B cell (primary cell): ENCODE measurements at regions of chr19 and their contacts with region 1.

Region 1: DNA sequence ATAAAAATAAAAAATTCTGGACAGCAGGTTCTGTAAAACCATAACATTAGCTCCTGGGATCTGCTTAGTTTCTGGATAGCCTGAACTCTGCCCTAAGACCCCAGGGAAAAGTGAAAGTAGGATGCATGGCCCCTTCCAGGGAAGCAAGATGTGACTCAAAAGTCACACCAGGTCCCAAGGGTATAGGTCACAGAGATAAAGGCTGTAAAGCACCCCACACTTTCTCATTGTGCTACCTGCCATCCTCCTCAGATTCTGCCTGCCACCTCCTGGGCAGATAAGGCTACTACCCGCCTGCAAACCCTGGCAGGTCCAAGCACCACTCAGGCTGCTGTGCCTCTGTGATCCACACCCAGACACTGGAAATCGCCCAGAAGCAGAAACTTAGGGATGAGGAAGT is 20.6 kb downstream of the FFAR2 start:
- DNase-seq: peak; percentile 84
- ATAC-seq: peak; percentile 100
- H3K4me3 ChIP-seq: no peak overlapping the region
- H3K4me3 Mint-ChIP-seq: no peak overlapping the region
- H3K27ac ChIP-seq: no peak overlapping the region
- H3K27ac Mint-ChIP-seq: peak overlapping the region; percentile 23
- H3K4me1 ChIP-seq: peaks cover 2 to 12% of the 10 kb centered on the region in 2 donors
- H3K4me1 Mint-ChIP-seq: peaks cover 10% of the 10 kb centered on the region
- H3K27me3 ChIP-seq: no peaks in the 10 kb centered on the region
- H3K27me3 Mint-ChIP-seq: no peaks in the 10 kb centered on the region
- CTCF ChIP-seq: peak; percentile 84

Region 2: GRCh38 chr19:35269421-35270117 is 199.1 kb before region 1 on chr19:
- CTCF ChIA-PET with region 1: interaction called, 9 read pairs
- POLR2A ChIA-PET with region 1: interaction called, 4 read pairs
- intact Hi-C with region 1: loop called (anchors 1 kb)
- DNase-seq: peak; percentile 92
- ATAC-seq: peak; percentile 71
- H3K4me3 ChIP-seq: peak overlapping the region in 4 of 5 experiments; percentile 24 to 62 (median 54)
- H3K4me3 Mint-ChIP-seq: peak overlapping the region; percentile 84
- H3K27ac ChIP-seq: no peak overlapping the region
- H3K27ac Mint-ChIP-seq: peak overlapping the region; percentile 87
- H3K4me1 ChIP-seq: peaks cover 39 to 57% of the 10 kb centered on the region in 2 donors
- H3K4me1 Mint-ChIP-seq: peaks cover 62% of the 10 kb centered on the region
- H3K27me3 ChIP-seq: no peaks in the 10 kb centered on the region
- H3K27me3 Mint-ChIP-seq: no peaks in the 10 kb centered on the region
- CTCF ChIP-seq: peak; percentile 77

Region 3: DNA sequence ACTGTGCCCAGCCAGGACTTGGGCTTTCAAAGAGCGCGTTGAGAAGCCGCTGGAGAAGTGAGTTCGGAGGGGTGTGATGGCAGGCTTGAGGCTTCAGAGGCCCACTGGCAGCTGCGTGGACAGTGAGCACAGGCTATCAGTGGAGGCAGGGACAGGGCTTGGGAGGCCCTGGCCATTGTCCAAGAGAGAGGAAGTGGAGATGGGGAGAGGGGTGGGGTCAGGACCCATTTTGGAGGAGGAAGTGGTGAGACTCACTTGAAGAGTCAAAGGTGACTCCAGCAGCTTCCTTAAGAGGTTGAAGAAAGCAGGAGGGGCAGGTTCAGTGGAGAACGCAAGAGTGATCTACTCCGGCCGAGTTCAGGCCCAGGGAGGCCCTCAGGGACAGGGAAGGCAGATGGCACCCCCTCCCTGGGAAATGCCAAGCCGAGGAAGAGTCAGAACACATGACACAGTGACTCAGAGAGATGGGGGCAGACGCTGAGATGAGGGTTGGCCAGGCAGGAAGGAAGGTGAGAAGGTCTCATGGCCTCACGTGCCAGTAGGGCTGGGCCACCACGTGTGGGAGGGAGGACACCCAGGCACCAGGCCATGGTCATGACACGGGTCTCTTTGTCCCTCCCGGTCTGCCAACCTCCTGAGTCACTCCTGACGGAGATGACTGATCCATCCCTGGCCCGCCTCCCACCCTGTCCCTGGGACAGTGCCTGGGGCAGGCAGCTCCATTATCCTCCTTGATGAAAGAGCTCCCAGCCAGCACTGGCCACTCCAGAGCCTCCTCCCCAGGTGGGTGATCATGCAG is 149.8 kb before region 1 on chr19:
- CTCF ChIA-PET with region 1: interaction called, 13 read pairs
- POLR2A ChIA-PET with region 1: interaction called, 3 read pairs
- intact Hi-C with region 1: no loop called
- DNase-seq: peak; percentile 65
- ATAC-seq: peak; percentile 25
- H3K4me3 ChIP-seq: peak overlapping the region in 1 of 5 experiments; percentile 53
- H3K4me3 Mint-ChIP-seq: peak overlapping the region; percentile 75
- H3K27ac ChIP-seq: peak overlapping the region; percentile 94 to 97
- H3K27ac Mint-ChIP-seq: peak overlapping the region; percentile 91
- H3K4me1 ChIP-seq: peaks cover 81 to 97% of the 10 kb centered on the region in 2 donors
- H3K4me1 Mint-ChIP-seq: peaks cover 85% of the 10 kb centered on the region
- H3K27me3 ChIP-seq: no peaks in the 10 kb centered on the region
- H3K27me3 Mint-ChIP-seq: no peaks in the 10 kb centered on the region
- CTCF ChIP-seq: no peak

Region 4: DNA sequence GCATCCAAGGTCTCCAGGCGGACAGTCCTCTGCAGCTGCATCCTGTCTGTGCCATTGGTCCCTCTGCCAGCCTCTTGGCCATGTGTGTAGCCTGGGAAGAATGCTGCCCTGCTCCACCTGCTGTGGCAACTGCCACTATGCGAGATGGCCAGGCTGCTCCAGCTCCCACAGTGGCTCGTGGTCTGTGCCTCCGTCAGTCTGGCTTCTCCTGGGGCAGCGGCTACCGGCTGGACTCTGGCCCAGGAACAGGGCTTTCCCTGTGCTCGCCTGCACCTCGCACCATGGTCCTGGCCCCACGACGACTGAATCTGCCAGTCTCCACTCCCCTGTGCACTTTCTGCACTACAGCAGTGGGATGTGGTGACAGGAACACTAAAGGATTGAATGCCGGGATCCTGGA is 47.3 kb before region 1 on chr19:
- CTCF ChIA-PET with region 1: interaction called, 20 read pairs
- POLR2A ChIA-PET with region 1: interaction called, 5 read pairs
- intact Hi-C with region 1: loop called (anchors 1 kb)
- DNase-seq: no peak
- ATAC-seq: no peak
- H3K4me3 ChIP-seq: no peak overlapping the region
- H3K4me3 Mint-ChIP-seq: no peak overlapping the region
- H3K27ac ChIP-seq: no peak overlapping the region
- H3K27ac Mint-ChIP-seq: no peak overlapping the region
- H3K4me1 ChIP-seq: peaks cover 3 to 4% of the 10 kb centered on the region in 2 donors
- H3K4me1 Mint-ChIP-seq: peaks cover 10% of the 10 kb centered on the region
- H3K27me3 ChIP-seq: peaks cover 0 to 6% (median 2%) of the 10 kb centered on the region in 4 experiments
- H3K27me3 Mint-ChIP-seq: peaks cover 30% of the 10 kb centered on the region
- CTCF ChIP-seq: no peak

Region 5: DNA sequence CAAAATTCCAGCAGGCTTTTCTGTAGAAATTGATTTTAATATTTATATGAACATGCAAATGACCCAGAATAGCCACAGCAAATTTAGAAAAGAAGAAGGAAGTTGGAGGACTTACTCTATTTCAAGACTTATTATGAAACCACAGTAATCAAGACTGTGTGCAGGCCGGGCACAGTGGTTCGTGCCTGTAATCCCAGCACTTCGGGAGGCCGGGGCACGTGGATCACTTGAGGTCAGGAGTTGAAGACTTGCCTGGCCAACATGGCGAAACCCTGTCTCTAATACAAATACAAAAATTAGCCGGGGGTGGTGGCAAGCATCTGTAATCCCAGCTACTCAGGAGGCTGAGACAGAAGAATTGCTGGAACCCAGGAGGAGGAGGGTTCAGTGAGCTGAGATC is 26.5 kb before region 1 on chr19:
- CTCF ChIA-PET with region 1: no interaction called
- POLR2A ChIA-PET with region 1: no interaction called
- intact Hi-C with region 1: no loop called
- DNase-seq: peak; percentile 34
- ATAC-seq: no peak
- H3K4me3 ChIP-seq: peak overlapping the region in 2 of 5 experiments; percentile 6 to 29
- H3K4me3 Mint-ChIP-seq: peak overlapping the region; percentile 57
- H3K27ac ChIP-seq: no peak overlapping the region
- H3K27ac Mint-ChIP-seq: no peak overlapping the region
- H3K4me1 ChIP-seq: peaks cover 19 to 25% of the 10 kb centered on the region in 2 donors
- H3K4me1 Mint-ChIP-seq: peaks cover 50% of the 10 kb centered on the region
- H3K27me3 ChIP-seq: peaks cover 0 to 2% (median 0%) of the 10 kb centered on the region in 4 experiments
- H3K27me3 Mint-ChIP-seq: peaks cover 6% of the 10 kb centered on the region
- CTCF ChIP-seq: no peak

Region 6: DNA sequence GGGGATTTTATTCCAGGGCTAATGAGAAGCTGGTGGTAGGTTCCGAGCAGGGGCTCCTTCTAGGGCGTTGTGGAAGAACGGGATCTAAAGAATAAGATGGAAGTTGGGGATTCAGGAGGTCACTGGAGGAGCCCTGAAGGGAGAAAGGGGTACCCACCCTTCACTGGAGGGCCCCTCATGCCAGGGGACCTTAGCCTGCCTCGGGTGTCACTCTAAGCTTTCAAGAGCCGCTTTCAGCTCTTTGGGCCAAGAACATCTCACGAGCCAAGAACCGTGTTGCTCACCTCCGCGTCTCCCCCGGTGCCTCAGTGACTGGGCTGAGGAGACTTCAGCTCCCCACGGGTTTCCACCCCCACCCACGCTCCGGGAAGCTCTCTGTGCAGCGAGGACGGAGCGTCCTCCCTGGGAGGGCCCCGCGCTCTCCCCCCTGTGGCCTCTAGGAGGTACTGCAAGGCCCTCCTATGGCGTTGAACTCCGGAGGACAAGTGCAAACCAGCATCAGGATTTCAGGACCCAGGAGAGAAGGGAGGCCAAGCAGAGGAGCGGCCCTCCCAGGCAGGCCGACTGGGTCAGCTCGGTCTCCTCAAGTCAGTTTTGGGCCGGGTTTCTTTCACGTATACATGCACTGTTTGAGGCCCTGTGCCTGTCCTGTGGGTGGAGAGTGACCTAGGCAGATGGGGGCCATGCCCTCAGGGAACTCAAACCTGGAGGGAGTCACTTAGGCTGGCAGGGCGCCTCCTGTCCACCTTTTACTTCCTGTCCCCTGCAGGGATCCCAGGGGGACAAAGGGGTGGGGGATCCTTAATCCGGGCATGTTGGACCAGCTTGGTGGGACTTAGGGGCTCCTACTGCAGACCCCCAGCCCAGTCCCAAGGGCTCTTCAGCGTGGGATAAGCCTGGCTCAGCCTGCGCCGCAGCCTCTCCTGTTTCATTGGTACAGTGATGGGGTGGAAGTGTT is 26.7 kb after region 1 on chr19:
- CTCF ChIA-PET with region 1: interaction called, 21 read pairs
- POLR2A ChIA-PET with region 1: no interaction called
- intact Hi-C with region 1: loop called (anchors 1 kb)
- DNase-seq: peak; percentile 82
- ATAC-seq: peak; percentile 99
- H3K4me3 ChIP-seq: peak overlapping the region in 1 of 5 experiments; percentile 24
- H3K4me3 Mint-ChIP-seq: no peak overlapping the region
- H3K27ac ChIP-seq: no peak overlapping the region
- H3K27ac Mint-ChIP-seq: no peak overlapping the region
- H3K4me1 ChIP-seq: peaks cover 6 to 11% of the 10 kb centered on the region in 2 donors
- H3K4me1 Mint-ChIP-seq: peaks cover 8% of the 10 kb centered on the region
- H3K27me3 ChIP-seq: peaks cover 0 to 6% (median 2%) of the 10 kb centered on the region in 4 experiments
- H3K27me3 Mint-ChIP-seq: peaks cover 9% of the 10 kb centered on the region
- CTCF ChIP-seq: peak; percentile 100

Region 7: DNA sequence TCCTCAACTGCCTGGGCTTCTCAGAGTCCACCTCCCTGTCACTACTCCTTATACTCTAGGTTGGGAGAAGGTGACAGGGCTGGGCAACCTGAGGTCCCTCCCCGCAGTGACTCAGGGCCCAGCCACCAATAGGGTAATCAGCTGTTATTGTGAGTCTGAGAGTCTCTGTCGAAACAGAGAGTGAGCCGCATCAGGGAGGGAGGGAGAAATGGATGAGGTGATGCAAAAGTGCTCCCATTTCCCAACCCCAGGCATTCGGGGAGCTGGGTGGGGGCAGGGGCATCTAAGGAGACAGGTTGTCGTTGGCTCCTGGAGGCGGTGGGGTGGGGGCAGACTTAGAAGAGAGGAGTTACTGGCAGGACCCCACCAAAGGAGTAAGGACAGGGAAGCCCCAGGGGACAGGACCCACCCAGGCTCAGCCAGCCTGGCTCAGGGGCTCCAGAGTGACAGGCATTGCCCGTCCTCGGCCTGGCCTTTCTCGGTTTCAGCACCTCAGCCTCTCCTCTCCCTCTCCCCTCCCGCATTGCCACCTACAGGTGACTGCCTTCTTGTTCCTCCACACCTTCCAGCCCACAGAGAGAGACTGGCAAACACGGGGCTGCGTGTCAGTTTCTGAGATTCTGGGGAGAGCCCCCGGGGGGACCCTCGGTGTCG is 45.1 kb after region 1 on chr19 and contains the start of gene DMKN:
- CTCF ChIA-PET with region 1: no interaction called
- POLR2A ChIA-PET with region 1: no interaction called
- intact Hi-C with region 1: no loop called
- DNase-seq: no peak
- ATAC-seq: no peak
- H3K4me3 ChIP-seq: no peak within 1 kb of the TSS
- H3K4me3 Mint-ChIP-seq: no peak within 1 kb of the TSS
- H3K27ac ChIP-seq: no peak within 1 kb of the TSS
- H3K27ac Mint-ChIP-seq: no peak within 1 kb of the TSS
- H3K4me1 ChIP-seq: peaks cover 19 to 21% of the 10 kb centered on the region in 2 donors
- H3K4me1 Mint-ChIP-seq: peaks cover 19% of the 10 kb centered on the region
- H3K27me3 ChIP-seq: peaks cover 0 to 50% (median 12%) of the 10 kb centered on the region in 4 experiments
- H3K27me3 Mint-ChIP-seq: peaks cover 39% of the 10 kb centered on the region
- CTCF ChIP-seq: no peak
- total RNA-seq, gene DMKN: 1.8 and 4.5 TPM in 2 replicates

Region 8: GRCh38 chr19:35889370-35890112 is 420.9 kb after region 1 on chr19:
- CTCF ChIA-PET with region 1: no interaction called
- POLR2A ChIA-PET with region 1: no interaction called
- intact Hi-C with region 1: no loop called
- DNase-seq: peak; percentile 65
- ATAC-seq: no peak
- H3K4me3 ChIP-seq: no peak overlapping the region
- H3K4me3 Mint-ChIP-seq: no peak overlapping the region
- H3K27ac ChIP-seq: no peak overlapping the region
- H3K27ac Mint-ChIP-seq: peak overlapping the region; percentile 29
- H3K4me1 ChIP-seq: no peaks in the 10 kb centered on the region
- H3K4me1 Mint-ChIP-seq: peaks cover 11% of the 10 kb centered on the region
- H3K27me3 ChIP-seq: no peaks in the 10 kb centered on the region
- H3K27me3 Mint-ChIP-seq: no peaks in the 10 kb centered on the region
- CTCF ChIP-seq: no peak